ENCODE measurements at regions of chr1 and their contacts with region 1.

Region 1: DNA sequence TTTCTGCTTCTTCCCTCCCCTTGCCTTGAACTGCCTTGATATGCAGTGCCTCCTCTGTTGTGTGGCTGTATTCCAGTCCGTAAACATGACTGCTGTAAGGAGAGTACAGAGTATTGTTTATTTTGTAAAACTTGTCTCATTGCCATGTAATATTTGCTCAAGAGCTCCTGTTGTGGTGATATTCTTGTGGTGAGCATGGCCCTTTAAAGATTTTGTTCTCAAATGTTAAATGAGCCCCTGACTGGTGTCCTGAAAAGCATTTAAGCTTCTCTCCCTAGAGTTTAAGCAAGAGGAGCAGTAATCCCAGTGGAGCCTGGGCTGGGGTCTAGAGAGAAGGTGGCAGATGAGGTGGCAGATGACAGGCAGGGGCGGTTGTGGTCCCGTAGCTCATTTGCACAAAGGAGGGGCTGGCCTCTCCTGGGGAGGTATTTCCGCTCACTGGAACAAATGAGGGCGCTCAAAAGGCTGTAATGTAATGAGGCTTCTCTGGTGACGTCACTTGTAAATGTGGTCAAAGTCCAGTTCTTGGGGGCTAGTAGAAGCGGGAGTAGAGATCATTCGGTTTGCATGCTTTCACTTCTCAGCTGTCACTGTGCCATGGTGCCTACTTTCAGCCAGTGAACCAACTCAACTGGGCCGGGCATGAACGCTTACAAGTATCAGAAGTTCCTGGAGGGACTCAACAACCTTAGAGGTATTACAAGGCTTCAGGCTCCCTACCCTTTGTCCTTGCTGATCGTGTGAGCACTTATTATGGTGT is 46.0 kb upstream of the MACF1 start:
- DNase-seq: peak; percentile 91
- ATAC-seq: peak; percentile 65
- H3K4me3 ChIP-seq: peak overlapping the region; percentile 61
- H3K27ac ChIP-seq: peak overlapping the region; percentile 97
- H3K4me1 ChIP-seq: peaks cover 65% of the 10 kb centered on the region
- H3K27me3 ChIP-seq: no peaks in the 10 kb centered on the region
- CTCF ChIP-seq: 0 out of 2 replicates have a peak, but pooled peaks have one; percentile 30

Region 2: GRCh38 chr1:39183503-39184353 is 25.2 kb after region 1 on chr1:
- CTCF ChIA-PET with region 1: interaction called, 3 read pairs
- POLR2A ChIA-PET with region 1: interaction called, 4 read pairs
- intact Hi-C with region 1: loop called (anchors 1 kb)
- DNase-seq: peak; percentile 98
- ATAC-seq: peak; percentile 77
- H3K4me3 ChIP-seq: no peak overlapping the region
- H3K27ac ChIP-seq: peak overlapping the region; percentile 82
- H3K4me1 ChIP-seq: peaks cover 68% of the 10 kb centered on the region
- H3K27me3 ChIP-seq: no peaks in the 10 kb centered on the region
- CTCF ChIP-seq: peak; percentile 65

Region 3: DNA sequence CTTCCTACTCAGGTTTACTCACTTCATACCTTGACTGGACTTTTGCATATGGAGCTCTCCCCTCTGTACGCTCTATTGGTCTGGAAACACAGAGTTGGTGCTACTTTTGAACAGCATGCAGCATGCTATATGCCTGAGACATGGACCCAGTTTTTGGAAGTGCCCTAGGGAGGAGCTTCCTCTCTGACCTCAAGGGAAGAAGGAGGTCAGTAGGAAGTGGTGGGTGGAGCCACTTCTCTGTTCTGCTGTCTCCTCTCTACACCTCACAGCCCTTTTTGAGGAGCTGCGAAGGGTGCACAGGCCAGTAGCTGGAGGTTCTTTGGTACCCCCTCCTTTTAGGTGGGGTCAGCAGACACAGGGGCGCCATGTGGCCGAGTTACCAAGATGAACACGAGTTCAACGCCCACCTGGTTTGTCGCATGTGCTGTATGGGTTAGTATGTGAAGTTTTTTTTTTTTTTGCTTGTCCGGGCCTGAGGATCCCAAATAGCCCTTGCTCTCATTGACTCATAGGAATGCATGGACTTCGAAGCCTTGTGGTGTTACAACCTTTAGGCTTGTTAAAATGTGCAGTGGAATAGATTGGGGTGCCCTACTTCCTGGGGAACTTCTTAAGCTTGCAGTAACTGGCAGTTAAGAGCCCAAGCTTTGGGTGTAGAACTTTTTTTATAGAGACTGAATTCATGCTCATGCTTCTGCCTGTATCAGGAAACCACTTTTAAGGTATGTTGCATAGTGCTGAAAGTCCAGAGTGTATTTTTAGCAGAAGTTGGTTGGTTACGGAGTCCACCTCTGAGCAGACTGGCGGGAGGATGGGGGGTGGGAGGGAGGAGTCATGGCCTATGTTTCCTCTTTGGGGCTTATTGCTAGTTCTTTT is 56.7 kb after region 1 on chr1:
- CTCF ChIA-PET with region 1: no interaction called
- POLR2A ChIA-PET with region 1: no interaction called
- intact Hi-C with region 1: no loop called
- DNase-seq: no peak
- ATAC-seq: no peak
- H3K4me3 ChIP-seq: no peak overlapping the region
- H3K27ac ChIP-seq: no peak overlapping the region
- H3K4me1 ChIP-seq: peaks cover 6% of the 10 kb centered on the region; the same call in 1 of the 2 replicates
- H3K27me3 ChIP-seq: no peaks in the 10 kb centered on the region
- CTCF ChIP-seq: no peak

Measured in PC-3 (cell line).